Activated CD8-positive, alpha-beta T cell treated with anti-CD3 and anti-CD28 coated beads for 36 hours (primary cell): ENCODE measurements at regions of chrX and their contacts with region 1.

Region 1: DNA sequence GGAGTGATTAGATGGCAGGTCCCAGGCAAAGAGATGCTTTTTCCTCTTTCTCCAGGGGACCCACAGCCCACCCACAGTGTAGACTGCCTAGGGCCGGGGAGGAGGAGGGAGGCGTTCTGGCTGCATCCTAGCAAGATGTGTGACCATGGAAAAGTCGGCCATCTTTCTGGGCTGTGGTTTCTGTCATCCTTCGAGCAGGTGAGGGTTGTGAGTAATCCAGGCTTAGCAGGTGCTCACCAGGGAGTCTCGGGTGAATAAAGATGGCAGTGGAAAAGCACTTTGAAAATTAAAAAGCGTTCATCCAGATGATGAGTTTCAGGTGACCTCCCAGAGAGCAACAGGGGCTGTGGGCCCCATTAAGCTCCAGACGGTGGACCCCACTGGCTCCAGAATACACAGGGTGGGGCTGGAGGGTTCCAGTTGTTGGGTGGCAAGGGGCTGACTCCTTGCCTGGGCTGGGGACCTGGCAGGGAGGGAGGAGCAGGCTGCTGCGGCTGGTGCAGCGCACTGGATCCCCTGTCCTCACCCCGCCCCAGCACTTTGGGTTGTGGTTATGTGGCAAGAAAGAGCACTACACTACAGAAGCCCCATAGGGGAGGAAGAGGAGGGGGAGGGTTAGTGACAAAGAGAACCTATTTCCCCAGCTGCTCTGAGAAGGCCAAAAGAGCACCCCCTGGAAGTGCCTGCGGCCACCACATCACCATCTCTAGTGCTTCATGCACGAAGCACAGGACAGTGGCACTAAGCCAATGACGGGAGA is 23.7 kb downstream of the ELF4 start:
- DNase-seq: peak; percentile 88
- ATAC-seq: peak; percentile 60
- H3K4me3 Mint-ChIP-seq: peak overlapping the region; percentile 63
- H3K27ac Mint-ChIP-seq: peak overlapping the region; percentile 91
- H3K4me1 Mint-ChIP-seq: peaks cover 70% of the 10 kb centered on the region
- H3K27me3 Mint-ChIP-seq: no peaks in the 10 kb centered on the region
- CTCF ChIP-seq: no peak

Region 2: DNA sequence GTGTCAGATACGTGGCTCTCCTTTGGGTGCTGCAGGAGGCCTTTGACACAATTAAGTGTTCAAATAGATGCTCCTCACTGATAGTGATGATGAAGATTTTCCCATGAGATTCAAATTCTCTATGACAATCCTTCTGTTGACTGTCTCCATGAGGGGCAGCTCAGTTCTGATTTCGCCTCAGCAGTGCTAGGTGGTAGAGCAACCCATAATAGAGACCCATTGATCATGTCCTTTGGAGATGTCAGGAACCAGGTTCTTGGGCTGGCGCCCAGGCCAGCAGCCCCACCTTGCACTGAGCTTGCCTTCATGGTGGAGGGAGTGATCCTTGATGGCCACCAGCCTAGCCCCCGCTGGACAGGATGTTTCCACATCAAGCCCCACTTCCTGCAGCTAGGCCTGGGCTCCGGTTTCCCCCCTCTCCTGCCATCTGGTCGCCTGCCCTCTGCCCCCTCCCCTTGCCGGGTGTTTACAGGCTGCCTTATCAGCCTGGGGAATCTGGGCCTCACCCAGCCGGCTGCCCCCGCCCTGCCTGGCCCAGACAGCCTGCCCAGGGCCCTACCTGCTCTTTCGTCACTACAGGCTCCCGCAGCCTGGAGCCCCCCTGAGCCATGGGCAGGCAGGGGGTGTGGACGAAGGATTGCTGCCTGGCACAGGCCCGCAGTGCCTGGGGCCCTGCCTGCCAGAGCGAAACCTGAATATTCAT is 11.0 kb after region 1 on chrX:
- CTCF ChIA-PET with region 1: interaction called, 14 read pairs
- POLR2A ChIA-PET with region 1: interaction called, 10 read pairs
- intact Hi-C with region 1: no loop called
- DNase-seq: peak; percentile 23
- ATAC-seq: peak; percentile 59
- H3K4me3 Mint-ChIP-seq: no peak overlapping the region
- H3K27ac Mint-ChIP-seq: peak overlapping the region; percentile 81
- H3K4me1 Mint-ChIP-seq: peaks cover 65% of the 10 kb centered on the region
- H3K27me3 Mint-ChIP-seq: no peaks in the 10 kb centered on the region
- CTCF ChIP-seq: no peak

Region 3: DNA sequence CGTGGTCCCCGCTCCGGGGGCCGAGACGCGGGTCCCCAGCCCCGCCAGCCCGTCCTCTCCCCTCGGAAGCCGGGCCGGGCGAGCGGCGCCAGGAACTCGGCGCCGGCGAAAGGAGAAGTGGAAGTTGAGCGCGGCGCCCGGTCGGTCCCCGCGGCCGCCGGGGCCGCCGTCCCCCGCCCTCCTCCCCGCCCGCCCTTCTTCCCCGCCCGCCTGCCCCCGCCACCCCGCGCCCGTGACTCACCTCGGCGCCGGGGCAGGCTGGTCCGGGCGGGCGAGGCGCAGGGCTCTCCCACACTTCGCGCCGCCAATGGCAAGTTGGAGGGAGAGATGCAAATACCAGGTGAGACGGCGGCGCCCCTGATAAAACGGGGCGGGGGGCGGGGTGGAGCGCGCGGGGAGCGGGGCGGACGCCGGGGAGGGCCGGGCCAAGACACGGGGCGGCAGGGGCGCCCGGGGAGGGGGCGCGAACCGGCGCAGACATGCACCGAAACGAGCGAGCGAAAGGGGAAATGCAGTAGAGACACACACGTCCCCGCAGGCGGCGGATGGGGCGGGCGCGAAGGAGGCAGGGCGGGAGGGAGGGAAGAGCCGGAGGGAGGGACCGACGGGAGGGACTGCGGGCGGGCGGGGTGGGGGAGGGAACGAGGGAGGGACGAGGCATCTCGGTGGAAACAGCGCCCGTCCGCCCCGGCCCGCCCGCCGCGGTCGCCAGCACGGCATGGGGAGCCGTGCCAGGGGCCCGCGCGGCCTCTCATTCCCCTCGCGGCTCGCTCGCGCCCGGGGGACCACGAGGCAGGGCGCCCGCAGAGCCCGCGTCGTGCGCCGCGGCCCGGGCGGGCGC is 24.0 kb after region 1 on chrX and contains the start of gene ELF4:
- CTCF ChIA-PET with region 1: interaction called, 18 read pairs
- POLR2A ChIA-PET with region 1: interaction called, 22 read pairs
- intact Hi-C with region 1: no loop called
- DNase-seq: peak; percentile 58
- ATAC-seq: peak; percentile 70
- H3K4me3 Mint-ChIP-seq: peak within 1 kb of the TSS; percentile 90
- H3K27ac Mint-ChIP-seq: peak within 1 kb of the TSS; percentile 95
- H3K4me1 Mint-ChIP-seq: peaks cover 40% of the 10 kb centered on the region
- H3K27me3 Mint-ChIP-seq: no peaks in the 10 kb centered on the region
- CTCF ChIP-seq: no peak
- total RNA-seq, gene ELF4: 17.5 TPM

Region 4: DNA sequence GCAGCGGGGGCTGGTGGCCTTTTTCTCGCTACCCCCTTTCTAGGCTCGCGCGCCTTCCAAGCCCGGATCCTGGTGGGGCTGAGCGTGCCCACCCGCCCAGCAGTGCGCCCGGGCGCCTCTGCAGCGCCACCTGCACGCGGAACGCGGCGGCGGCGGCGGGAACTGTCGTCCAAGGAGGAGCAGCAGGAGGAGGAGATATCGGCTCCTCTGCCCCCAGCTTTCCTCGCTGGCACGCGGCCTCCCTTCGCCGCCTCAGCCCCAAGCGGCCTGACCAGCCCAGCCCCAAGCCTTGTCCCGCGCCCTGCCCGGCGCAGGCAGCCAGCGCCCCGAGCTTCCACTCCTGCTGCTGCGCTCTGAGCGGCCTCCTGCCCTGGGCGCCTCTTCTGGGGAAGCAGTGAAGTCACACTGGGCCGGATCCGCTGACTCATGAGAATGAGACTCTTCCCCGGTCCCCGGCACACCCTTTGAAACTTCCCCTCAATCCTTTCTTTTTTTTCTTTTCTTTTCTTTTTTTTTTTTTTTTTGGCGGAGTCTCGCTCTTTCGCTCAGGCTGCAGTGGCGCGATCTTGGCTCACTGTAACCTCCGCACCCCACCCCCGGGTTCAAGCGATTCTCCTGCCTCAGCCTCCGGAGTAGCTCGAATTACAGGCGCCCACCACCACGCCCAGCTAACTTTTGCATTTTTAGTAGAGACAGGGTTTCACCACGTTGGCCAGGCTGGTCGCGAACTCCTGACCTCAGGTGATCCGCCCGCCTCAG is 34.3 kb after region 1 on chrX:
- CTCF ChIA-PET with region 1: interaction called, 87 read pairs
- POLR2A ChIA-PET with region 1: interaction called, 26 read pairs
- intact Hi-C with region 1: loop called (anchors 2 kb)
- DNase-seq: peak; percentile 74
- ATAC-seq: peak; percentile 83
- H3K4me3 Mint-ChIP-seq: peak overlapping the region; percentile 59
- H3K27ac Mint-ChIP-seq: peak overlapping the region; percentile 63
- H3K4me1 Mint-ChIP-seq: peaks cover 22% of the 10 kb centered on the region
- H3K27me3 Mint-ChIP-seq: no peaks in the 10 kb centered on the region
- CTCF ChIP-seq: peak; percentile 60

Region 5: GRCh38 chrX:130204647-130205046 is 118.0 kb after region 1 on chrX:
- CTCF ChIA-PET with region 1: no interaction called
- POLR2A ChIA-PET with region 1: no interaction called
- intact Hi-C with region 1: no loop called
- DNase-seq: no peak
- ATAC-seq: no peak
- H3K4me3 Mint-ChIP-seq: no peak overlapping the region
- H3K27ac Mint-ChIP-seq: no peak overlapping the region
- H3K4me1 Mint-ChIP-seq: no peaks in the 10 kb centered on the region
- H3K27me3 Mint-ChIP-seq: no peaks in the 10 kb centered on the region
- CTCF ChIP-seq: no peak